Activated CD8-positive, alpha-beta T cell treated with anti-CD3 and anti-CD28 coated beads for 36 hours (primary cell): ENCODE measurements at regions of chr10 and their contacts with region 1.

Region 1: DNA sequence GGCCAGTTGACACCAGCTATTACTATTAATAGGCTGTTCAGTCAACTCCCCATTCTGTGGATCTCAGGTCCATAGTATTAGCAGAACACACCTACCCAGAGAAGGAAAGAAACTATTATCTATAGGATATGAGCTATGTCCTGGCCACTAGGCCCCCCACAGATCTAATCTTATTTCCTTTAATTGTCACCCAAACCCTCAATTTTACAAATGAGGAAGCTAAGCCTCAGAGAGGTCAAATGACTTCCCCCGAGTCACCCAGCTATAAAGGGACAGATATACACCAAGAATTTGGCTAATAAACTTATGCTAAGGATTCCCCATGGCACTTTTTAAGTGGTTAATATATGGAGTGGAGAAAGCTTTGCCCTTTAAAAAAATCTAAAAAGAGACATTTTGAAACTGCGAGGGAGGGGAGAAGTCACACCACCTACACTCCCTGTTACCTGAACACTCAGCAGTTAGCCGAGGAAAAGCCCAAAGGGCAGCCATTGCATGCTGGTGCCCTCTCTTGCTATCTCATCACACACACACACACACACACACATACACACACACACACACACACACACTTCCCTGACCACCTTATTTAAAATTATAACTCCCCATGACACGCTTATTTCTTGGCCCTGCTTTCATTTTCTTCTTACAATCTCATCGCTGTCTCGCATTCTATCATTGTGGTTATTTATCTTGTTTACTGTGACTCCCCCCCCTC is 157.0 kb upstream of the ADO start:
- DNase-seq: peak; percentile 67
- ATAC-seq: peak; percentile 60
- H3K4me3 Mint-ChIP-seq: peak overlapping the region; percentile 0
- H3K27ac Mint-ChIP-seq: peak overlapping the region; percentile 18
- H3K4me1 Mint-ChIP-seq: peaks cover 50% of the 10 kb centered on the region
- H3K27me3 Mint-ChIP-seq: no peaks in the 10 kb centered on the region
- CTCF ChIP-seq: no peak

Region 2: DNA sequence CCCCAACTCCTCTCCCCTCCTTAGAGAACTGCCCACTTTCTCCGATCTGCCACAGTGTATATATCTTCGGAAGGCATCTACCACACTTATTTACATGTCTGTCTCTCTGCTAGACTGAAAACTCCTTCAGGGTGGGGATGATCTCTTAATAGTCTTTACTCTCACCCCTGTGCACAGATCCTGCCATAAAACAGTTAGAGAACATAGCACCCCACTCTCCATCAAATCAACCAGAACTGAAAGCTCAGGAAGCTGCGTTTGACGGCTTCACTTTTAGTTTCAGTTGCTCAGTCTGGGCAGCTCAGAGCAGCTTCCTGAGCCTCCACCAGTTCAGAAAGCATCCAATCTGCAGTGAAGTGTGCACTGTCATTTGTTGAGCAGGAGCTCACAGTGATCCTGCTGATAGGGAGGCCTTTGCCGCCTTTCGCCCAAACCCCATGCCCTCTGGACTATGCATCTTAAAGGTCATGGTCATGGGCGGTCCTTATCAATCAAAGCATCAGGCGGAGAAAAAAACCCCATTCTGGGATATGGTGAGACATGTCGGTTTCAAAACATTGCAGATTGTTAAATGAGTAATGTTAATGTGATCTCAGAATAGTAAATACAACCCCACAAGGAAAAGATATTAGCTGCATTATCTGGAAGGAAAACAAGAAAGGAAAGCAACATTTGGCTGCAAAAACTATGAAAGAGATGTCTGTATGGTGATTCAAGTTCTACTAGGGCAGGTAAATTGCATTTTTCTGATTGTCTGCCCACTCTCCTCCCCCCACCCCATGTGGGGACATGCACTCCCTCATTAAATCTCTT is 10.1 kb before region 1 on chr10:
- CTCF ChIA-PET with region 1: interaction called, 23 read pairs
- POLR2A ChIA-PET with region 1: interaction called, 11 read pairs
- intact Hi-C with region 1: no loop called
- DNase-seq: peak; percentile 90
- ATAC-seq: peak; percentile 93
- H3K4me3 Mint-ChIP-seq: no peak overlapping the region
- H3K27ac Mint-ChIP-seq: no peak overlapping the region
- H3K4me1 Mint-ChIP-seq: peaks cover 25% of the 10 kb centered on the region
- H3K27me3 Mint-ChIP-seq: no peaks in the 10 kb centered on the region
- CTCF ChIP-seq: no peak

Region 3: DNA sequence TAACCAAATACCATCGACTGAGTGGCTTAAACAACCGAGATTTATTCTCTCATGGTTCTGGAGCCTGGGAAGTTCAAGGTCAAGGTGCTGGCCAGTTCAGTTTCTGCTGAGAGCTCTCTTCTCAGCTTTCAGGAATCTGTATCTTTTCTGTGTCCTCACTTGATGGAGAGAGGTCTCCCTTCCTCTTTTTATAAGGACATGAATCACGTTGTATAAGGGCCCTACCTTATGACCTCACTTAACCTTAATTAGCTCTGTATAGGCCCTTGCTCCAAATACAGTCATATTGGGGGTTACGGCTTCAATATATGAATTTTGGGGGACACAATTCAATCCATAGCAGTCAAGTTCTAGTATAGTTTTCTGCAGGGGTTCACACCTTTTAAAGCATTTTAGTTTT is 21.8 kb after region 1 on chr10:
- CTCF ChIA-PET with region 1: no interaction called
- POLR2A ChIA-PET with region 1: no interaction called
- intact Hi-C with region 1: no loop called
- DNase-seq: no peak
- ATAC-seq: no peak
- H3K4me3 Mint-ChIP-seq: no peak overlapping the region
- H3K27ac Mint-ChIP-seq: no peak overlapping the region
- H3K4me1 Mint-ChIP-seq: peaks cover 13% of the 10 kb centered on the region
- H3K27me3 Mint-ChIP-seq: no peaks in the 10 kb centered on the region
- CTCF ChIP-seq: no peak